ENCODE measurements at regions of chr9 and their contacts with region 1.

Region 1: GRCh38 chr9:15529566-15530324 is 19.0 kb upstream of the PSIP1 start:
- DNase-seq: no peak
- H3K4me3 Mint-ChIP-seq: no peak overlapping the region
- H3K27ac Mint-ChIP-seq: no peak overlapping the region
- H3K4me1 Mint-ChIP-seq: peaks cover 4% of the 10 kb centered on the region
- H3K27me3 Mint-ChIP-seq: peaks cover 5% of the 10 kb centered on the region

Region 2: DNA sequence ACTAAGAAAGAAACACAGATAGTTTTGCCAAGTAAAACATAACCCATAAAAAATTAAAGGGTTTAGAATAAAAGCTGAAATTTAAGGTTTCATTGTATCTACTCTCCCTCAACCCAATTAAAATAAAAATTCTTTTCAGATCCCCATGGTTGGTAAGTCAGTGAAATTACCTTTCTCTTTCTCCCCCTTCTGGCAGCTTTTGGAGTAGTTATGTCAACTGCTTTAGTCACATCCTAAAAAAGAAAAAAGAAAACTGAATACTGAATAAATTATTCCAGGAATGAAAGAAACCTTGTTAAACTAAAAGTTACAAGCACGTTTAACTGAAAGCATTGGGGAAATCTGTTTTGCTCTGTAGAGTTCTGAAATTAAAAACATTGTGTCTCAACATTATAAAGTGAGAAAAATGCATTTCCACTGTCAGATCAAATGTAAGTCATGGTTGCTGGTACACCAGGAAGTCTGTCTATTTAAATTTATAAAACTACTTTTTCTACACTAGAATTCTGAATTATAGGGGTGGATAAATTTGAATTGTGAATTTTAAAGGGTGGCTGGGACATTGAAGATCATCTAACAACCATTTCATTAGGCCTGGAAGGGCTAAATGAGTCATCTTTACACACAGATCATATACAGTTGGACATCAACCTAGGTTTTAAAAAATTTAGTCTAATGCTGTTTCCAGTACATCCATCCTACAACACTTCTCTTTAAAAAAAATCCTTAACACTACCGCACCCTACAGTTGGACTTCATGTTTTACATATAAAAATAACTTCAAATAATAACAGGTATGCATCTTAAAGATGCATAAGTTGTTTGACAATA is 43.7 kb before region 1 on chr9:
- intact Hi-C with region 1: loop called (anchors 1 kb)
- DNase-seq: no peak
- H3K4me3 Mint-ChIP-seq: no peak overlapping the region
- H3K27ac Mint-ChIP-seq: peak overlapping the region; percentile 38
- H3K4me1 Mint-ChIP-seq: peaks cover 22% of the 10 kb centered on the region
- H3K27me3 Mint-ChIP-seq: no peaks in the 10 kb centered on the region

Region 3: GRCh38 chr9:15510789-15511575 is 18.8 kb before region 1 on chr9 and contains the start of gene PSIP1:
- intact Hi-C with region 1: loop called (anchors 1 kb)
- DNase-seq: peak; percentile 96
- H3K4me3 Mint-ChIP-seq: peak within 1 kb of the TSS; percentile 87
- H3K27ac Mint-ChIP-seq: peak within 1 kb of the TSS; percentile 100
- H3K4me1 Mint-ChIP-seq: peaks cover 41% of the 10 kb centered on the region
- H3K27me3 Mint-ChIP-seq: peaks cover 3% of the 10 kb centered on the region
- total RNA-seq, gene PSIP1: 106 TPM in 2 replicates